Vagina (tissue), 2 donors: ENCODE measurements at regions of chr10 and their contacts with region 1.

Region 1: GRCh38 chr10:52115823-52116222 is 198.3 kb upstream of the DKK1 start:
- DNase-seq: no peak
- H3K4me3 ChIP-seq: no peak overlapping the region
- H3K27ac ChIP-seq: no peak overlapping the region
- H3K4me1 ChIP-seq: no peaks in the 10 kb centered on the region
- H3K27me3 ChIP-seq: no peaks in the 10 kb centered on the region
- CTCF ChIP-seq: no peak
- POLR2A ChIP-seq: no peak

Region 2: DNA sequence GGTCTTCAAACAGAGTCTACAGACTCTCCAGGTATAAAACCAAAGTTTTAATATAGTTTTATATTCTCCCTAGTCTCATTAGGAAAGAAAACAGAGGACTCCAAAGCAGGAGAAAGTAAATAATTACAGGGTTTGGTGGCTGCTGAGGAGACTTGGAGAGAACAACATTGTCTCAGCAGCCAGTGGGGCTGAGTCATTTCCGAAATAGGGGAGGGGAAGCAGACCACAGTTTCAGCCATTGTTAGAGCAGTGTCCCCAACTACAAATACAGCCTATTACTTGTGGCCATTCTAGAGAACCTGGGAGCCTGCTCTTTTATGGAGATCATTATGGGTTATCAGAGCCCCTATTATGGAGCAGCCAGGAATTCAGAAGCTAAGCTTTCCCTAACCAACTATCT is 1186.2 kb before region 1 on chr10:
- intact Hi-C with region 1: loop called (anchors 5 kb)
- DNase-seq: no peak
- H3K4me3 ChIP-seq: no peak overlapping the region
- H3K27ac ChIP-seq: no peak overlapping the region
- H3K4me1 ChIP-seq: no peaks in the 10 kb centered on the region
- H3K27me3 ChIP-seq: no peaks in the 10 kb centered on the region
- CTCF ChIP-seq: no peak
- POLR2A ChIP-seq: no peak

Region 3: GRCh38 chr10:52030051-52030790 is 85.6 kb before region 1 on chr10:
- intact Hi-C with region 1: no loop called
- DNase-seq: no peak
- H3K4me3 ChIP-seq: no peak overlapping the region
- H3K27ac ChIP-seq: no peak overlapping the region
- H3K4me1 ChIP-seq: no peaks in the 10 kb centered on the region
- H3K27me3 ChIP-seq: no peaks in the 10 kb centered on the region
- CTCF ChIP-seq: no peak
- POLR2A ChIP-seq: no peak

Region 4: GRCh38 chr10:52172581-52172980 is 56.8 kb after region 1 on chr10:
- intact Hi-C with region 1: no loop called
- DNase-seq: no peak
- H3K4me3 ChIP-seq: no peak overlapping the region
- H3K27ac ChIP-seq: no peak overlapping the region
- H3K4me1 ChIP-seq: no peaks in the 10 kb centered on the region
- H3K27me3 ChIP-seq: no peaks in the 10 kb centered on the region
- CTCF ChIP-seq: no peak
- POLR2A ChIP-seq: no peak

Region 5: DNA sequence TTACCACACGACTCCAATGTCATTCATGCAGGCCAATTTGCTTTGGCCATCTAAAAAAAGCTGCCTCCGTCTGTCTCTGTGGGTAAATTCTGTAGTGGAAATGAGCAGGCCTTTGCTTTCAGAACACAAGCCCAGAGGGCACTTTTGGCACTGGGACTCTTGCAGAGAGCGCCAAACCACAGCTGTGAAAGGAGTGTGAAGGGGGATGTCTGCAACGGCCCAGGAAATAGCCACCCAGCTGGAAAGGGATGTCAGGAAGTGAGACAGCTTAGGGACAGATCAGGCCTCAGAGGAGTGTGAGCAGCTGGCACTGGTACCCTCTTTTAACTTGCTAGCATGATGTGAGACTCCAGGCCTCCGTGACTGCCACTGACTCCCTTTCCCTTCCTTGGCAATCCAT is 350.6 kb after region 1 on chr10:
- intact Hi-C with region 1: no loop called
- DNase-seq: no peak
- H3K4me3 ChIP-seq: no peak overlapping the region
- H3K27ac ChIP-seq: no peak overlapping the region
- H3K4me1 ChIP-seq: no peaks in the 10 kb centered on the region
- H3K27me3 ChIP-seq: no peaks in the 10 kb centered on the region
- CTCF ChIP-seq: no peak
- POLR2A ChIP-seq: no peak